ENCODE measurements at regions of chr2 and their contacts with region 1.

Region 1: DNA sequence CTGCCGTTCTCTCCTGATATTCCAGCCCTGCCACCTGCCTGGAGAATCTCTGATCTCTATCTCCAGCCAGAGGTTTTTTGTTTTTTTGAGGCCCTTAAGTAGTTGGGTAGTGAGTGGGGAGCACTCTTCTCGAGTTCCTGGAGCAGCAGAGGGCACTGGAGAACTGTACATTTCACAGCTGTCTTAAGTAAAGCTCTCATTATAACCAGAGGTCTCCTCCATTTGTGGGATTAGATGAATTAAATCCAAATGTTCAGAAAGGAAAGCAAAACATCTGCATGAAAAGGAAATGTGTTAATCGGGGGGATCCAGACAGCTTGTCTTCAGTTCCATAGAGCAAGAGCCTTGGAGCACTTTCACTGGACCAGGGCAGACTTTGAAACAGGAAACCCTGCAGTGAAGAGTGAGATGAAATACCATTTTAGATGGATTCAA is 32.8 kb downstream of the AOX1 start:
- DNase-seq: peak in 1 of 2 experiments; percentile 30
- H3K4me3 ChIP-seq: no peak overlapping the region
- H3K4me3 Mint-ChIP-seq: no peak overlapping the region
- H3K27ac Mint-ChIP-seq: no peak overlapping the region
- H3K4me1 ChIP-seq: no peaks in the 10 kb centered on the region
- H3K4me1 Mint-ChIP-seq: peaks cover 7% of the 10 kb centered on the region
- H3K27me3 ChIP-seq: no peaks in the 10 kb centered on the region
- H3K27me3 Mint-ChIP-seq: no peaks in the 10 kb centered on the region
- CTCF ChIP-seq: peak in 1 of 2 experiments; percentile 55

Region 2: DNA sequence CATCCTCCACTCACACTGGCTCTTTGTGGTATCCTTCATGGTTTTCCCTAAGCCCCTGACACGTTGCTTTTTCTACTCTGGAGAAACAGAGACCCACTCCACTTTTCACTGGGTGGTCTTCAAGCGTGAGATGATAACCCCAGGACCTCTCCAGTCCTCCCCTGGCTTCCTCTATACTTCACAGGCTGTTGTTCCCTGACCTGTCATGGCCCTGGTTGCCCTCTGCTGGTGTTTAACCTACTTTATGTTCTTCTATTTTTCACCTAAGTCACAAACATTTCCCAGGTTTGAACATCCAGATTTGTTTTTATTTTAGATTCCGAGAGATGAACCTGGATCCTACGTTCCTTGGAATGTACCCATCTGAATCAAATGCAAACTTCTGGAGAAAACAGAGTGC is 51.7 kb after region 1 on chr2:
- CTCF ChIA-PET with region 1: interaction called, 3 read pairs
- POLR2A ChIA-PET with region 1: no interaction called
- intact Hi-C with region 1: loop called (anchors 1 kb)
- DNase-seq: peak in 1 of 2 experiments; percentile 13
- H3K4me3 ChIP-seq: no peak overlapping the region
- H3K4me3 Mint-ChIP-seq: no peak overlapping the region
- H3K27ac Mint-ChIP-seq: no peak overlapping the region
- H3K4me1 ChIP-seq: peaks cover 16% of the 10 kb centered on the region
- H3K4me1 Mint-ChIP-seq: no peaks in the 10 kb centered on the region
- H3K27me3 ChIP-seq: no peaks in the 10 kb centered on the region
- H3K27me3 Mint-ChIP-seq: no peaks in the 10 kb centered on the region
- CTCF ChIP-seq: peak; percentile 15 to 18

Region 3: DNA sequence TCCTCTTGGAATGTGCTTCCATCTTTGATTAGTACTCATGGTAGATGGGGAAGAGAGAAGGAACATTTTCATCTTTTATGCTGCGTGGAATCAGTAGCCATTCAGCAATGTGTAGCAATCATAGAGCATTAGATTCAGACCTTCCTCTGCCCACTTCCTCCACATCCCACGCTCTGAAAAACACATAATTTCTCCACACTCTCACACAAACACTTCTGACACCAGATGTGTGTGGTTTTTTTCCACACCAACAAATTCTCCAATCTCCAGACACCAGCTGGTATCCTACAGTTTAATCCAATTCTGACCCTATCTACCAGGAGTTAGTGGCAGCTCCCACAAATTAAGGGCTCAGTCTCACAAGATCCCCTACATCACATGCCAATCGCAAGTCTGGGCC is 70.5 kb after region 1 on chr2:
- CTCF ChIA-PET with region 1: no interaction called
- POLR2A ChIA-PET with region 1: no interaction called
- intact Hi-C with region 1: no loop called
- DNase-seq: no peak
- H3K4me3 ChIP-seq: no peak overlapping the region
- H3K4me3 Mint-ChIP-seq: no peak overlapping the region
- H3K27ac Mint-ChIP-seq: no peak overlapping the region
- H3K4me1 ChIP-seq: peaks cover 11% of the 10 kb centered on the region
- H3K4me1 Mint-ChIP-seq: peaks cover 2% of the 10 kb centered on the region
- H3K27me3 ChIP-seq: no peaks in the 10 kb centered on the region
- H3K27me3 Mint-ChIP-seq: peaks cover 2% of the 10 kb centered on the region
- CTCF ChIP-seq: no peak